Transverse colon (tissue), 4 donors: ENCODE measurements at regions of chr7 and their contacts with region 1.

Region 1: DNA sequence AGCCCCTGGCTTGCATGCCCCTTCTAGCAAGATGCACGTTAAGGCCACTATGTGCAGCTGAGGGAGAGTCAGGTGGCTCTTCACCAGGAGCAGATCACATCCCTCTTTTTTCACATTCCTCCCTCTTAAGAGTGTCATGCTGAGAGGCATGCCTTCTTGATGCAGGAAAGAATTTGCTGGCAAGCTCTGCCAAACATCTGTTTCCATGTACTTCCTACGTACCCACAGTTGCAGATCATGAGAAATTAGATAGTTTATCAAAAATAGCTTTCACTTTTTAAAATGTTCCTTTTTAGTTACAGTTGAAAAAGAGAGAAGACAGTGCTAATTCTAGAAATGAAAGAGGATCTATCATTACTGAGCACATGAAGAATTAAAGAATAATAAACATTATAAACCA is 79.7 kb upstream of the ZNF722 start:
- DNase-seq: no peak
- H3K4me3 ChIP-seq: no peak overlapping the region
- H3K27ac ChIP-seq: no peak overlapping the region
- H3K4me1 ChIP-seq: no peaks in the 10 kb centered on the region
- H3K27me3 ChIP-seq: no peaks in the 10 kb centered on the region
- CTCF ChIP-seq: no peak
- EP300 ChIP-seq: no peak
- POLR2A ChIP-seq: no peak

Region 2: GRCh38 chr7:63887031-63887430 is 32.0 kb before region 1 on chr7:
- in situ Hi-C with region 1: no loop called
- intact Hi-C with region 1: loop called (anchors 1 kb)
- DNase-seq: no peak
- H3K4me3 ChIP-seq: no peak overlapping the region
- H3K27ac ChIP-seq: no peak overlapping the region
- H3K4me1 ChIP-seq: no peaks in the 10 kb centered on the region
- H3K27me3 ChIP-seq: no peaks in the 10 kb centered on the region
- CTCF ChIP-seq: no peak
- EP300 ChIP-seq: no peak
- POLR2A ChIP-seq: no peak

Region 3: DNA sequence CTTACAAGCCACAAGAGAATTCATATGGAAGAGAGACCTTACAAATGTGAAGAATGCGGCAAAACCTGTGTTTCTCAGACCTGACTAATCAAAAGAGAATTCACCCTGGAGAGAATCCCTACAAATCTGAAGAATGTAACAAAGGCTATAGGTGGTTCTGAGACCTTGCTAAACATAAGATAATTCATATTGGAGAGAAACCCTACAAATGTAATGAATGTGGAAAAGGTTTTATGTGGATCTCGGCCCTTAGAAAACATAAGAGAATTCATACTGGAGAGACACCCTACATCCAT is 159.7 kb after region 1 on chr7:
- in situ Hi-C with region 1: no loop called
- intact Hi-C with region 1: no loop called
- DNase-seq: no peak
- H3K4me3 ChIP-seq: no peak overlapping the region
- H3K27ac ChIP-seq: no peak overlapping the region
- H3K4me1 ChIP-seq: no peaks in the 10 kb centered on the region
- H3K27me3 ChIP-seq: no peaks in the 10 kb centered on the region
- CTCF ChIP-seq: no peak
- EP300 ChIP-seq: no peak
- POLR2A ChIP-seq: no peak